Mammary epithelial cell (primary cell): ENCODE measurements at regions of chr14 and their contacts with region 1.

Region 1: GRCh38 chr14:103207029-103207387 is 83.7 kb downstream of the TNFAIP2 start:
- DNase-seq: no peak
- H3K4me3 ChIP-seq: no peak overlapping the region
- H3K27ac ChIP-seq: no peak overlapping the region
- H3K4me1 ChIP-seq: peaks cover 7% of the 10 kb centered on the region
- H3K27me3 ChIP-seq: peaks cover 10% of the 10 kb centered on the region
- CTCF ChIP-seq: no peak

Region 2: GRCh38 chr14:103091041-103091882 is 115.7 kb before region 1 on chr14:
- CTCF ChIA-PET with region 1: no interaction called
- dilution Hi-C with region 1: loop called (anchors 5 kb)
- in situ Hi-C with region 1: no loop called
- intact Hi-C with region 1: no loop called
- DNase-seq: no peak
- H3K4me3 ChIP-seq: peak overlapping the region; percentile 30 to 37 (median 34)
- H3K27ac ChIP-seq: no peak overlapping the region
- H3K4me1 ChIP-seq: peaks cover 5% of the 10 kb centered on the region
- H3K27me3 ChIP-seq: peaks cover 3% of the 10 kb centered on the region
- CTCF ChIP-seq: peak in 1 of 2 donors; percentile 37

Region 3: DNA sequence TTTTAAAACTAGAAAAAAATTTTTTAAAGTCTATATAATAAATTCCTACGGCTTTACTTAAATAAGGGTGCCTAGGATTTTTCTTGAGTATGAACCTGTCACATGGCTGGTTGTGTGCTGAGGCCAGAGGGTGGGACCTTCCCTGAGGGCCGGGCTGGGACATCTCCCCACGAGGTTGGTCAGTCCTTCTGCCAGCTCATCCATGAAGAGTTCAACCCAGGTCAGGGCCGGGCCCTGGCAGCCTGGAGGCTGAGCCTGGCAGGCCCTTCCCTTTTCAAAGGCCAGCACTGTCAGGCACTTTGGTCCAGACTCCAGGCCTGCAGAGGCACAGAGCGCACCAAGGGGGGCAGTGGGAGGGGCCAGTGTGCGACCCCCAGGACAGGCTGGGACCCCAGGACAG is 52.0 kb before region 1 on chr14:
- CTCF ChIA-PET with region 1: no interaction called
- dilution Hi-C with region 1: loop called (anchors 5 kb)
- in situ Hi-C with region 1: no loop called
- intact Hi-C with region 1: no loop called
- DNase-seq: peak; percentile 58
- H3K4me3 ChIP-seq: no peak overlapping the region
- H3K27ac ChIP-seq: no peak overlapping the region
- H3K4me1 ChIP-seq: peaks cover 13% of the 10 kb centered on the region
- H3K27me3 ChIP-seq: no peaks in the 10 kb centered on the region
- CTCF ChIP-seq: no peak

Region 4: GRCh38 chr14:103169954-103170353 is 37.1 kb before region 1 on chr14:
- CTCF ChIA-PET with region 1: no interaction called
- dilution Hi-C with region 1: no loop called
- in situ Hi-C with region 1: no loop called
- intact Hi-C with region 1: no loop called
- DNase-seq: no peak
- H3K4me3 ChIP-seq: no peak overlapping the region
- H3K27ac ChIP-seq: no peak overlapping the region
- H3K4me1 ChIP-seq: peaks cover under 1% of the 10 kb centered on the region
- H3K27me3 ChIP-seq: peaks cover 4% of the 10 kb centered on the region
- CTCF ChIP-seq: no peak

Region 5: DNA sequence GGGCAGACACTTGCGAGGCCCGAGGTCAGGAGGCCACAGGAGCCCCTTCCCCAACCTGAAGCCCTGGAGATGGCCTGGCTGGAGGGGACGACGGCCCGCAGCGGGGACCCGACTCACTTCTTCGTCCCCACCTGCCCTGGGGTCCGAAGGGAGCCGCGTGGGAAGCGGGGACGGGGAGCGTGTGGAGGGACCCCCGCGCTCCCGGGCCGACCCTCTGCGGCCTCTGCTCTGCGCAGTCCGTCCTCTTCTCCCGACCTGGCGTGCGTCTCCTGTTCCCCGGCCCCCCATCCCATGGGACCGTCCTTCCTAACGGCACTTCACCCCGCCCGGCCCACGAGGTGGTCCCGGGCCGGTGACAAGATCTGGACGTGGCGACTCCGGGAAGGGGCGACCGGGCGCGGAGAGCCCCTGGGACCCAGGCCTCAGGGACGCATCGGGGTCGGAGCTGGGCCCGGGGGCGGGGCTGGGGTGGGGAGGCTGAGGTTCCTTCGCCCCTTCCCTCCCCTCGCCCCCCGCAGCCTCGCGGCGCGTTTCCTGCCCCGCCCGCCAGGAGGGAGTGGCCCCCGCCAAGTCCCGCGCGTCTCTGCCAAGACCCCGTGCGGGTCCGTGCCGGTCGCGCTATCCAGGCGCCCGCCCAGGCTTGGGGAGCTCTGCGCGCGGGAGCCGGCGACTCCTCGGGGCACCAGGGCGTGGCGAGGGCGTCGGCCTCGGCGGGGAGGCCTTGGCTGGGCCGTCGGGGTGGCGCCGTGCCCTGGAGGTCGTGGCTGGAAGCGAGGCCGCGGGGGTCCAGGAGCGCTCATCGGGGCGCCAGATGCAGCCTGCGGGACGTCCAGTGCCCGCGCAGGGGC is 13.3 kb after region 1 on chr14:
- CTCF ChIA-PET with region 1: no interaction called
- dilution Hi-C with region 1: no loop called
- in situ Hi-C with region 1: no loop called
- intact Hi-C with region 1: loop called (anchors 2 kb)
- DNase-seq: no peak
- H3K4me3 ChIP-seq: peak overlapping the region in 1 of 3 experiments; percentile 28
- H3K27ac ChIP-seq: no peak overlapping the region
- H3K4me1 ChIP-seq: peaks cover 4% of the 10 kb centered on the region
- H3K27me3 ChIP-seq: peaks cover 7% of the 10 kb centered on the region
- CTCF ChIP-seq: no peak

Region 6: GRCh38 chr14:103247169-103247611 is 40.2 kb after region 1 on chr14:
- CTCF ChIA-PET with region 1: no interaction called
- dilution Hi-C with region 1: loop called (anchors 5 kb)
- in situ Hi-C with region 1: no loop called
- intact Hi-C with region 1: no loop called
- DNase-seq: no peak
- H3K4me3 ChIP-seq: no peak overlapping the region
- H3K27ac ChIP-seq: no peak overlapping the region
- H3K4me1 ChIP-seq: peaks cover 6% of the 10 kb centered on the region
- H3K27me3 ChIP-seq: no peaks in the 10 kb centered on the region
- CTCF ChIP-seq: no peak

Region 7: GRCh38 chr14:103281496-103282231 is 74.7 kb after region 1 on chr14:
- CTCF ChIA-PET with region 1: no interaction called
- dilution Hi-C with region 1: loop called (anchors 5 kb)
- in situ Hi-C with region 1: no loop called
- intact Hi-C with region 1: no loop called
- DNase-seq: peak; percentile 24
- H3K4me3 ChIP-seq: no peak overlapping the region
- H3K27ac ChIP-seq: no peak overlapping the region
- H3K4me1 ChIP-seq: peaks cover 5% of the 10 kb centered on the region
- H3K27me3 ChIP-seq: peaks cover 15% of the 10 kb centered on the region
- CTCF ChIP-seq: peak in 1 of 2 donors; percentile 51